GM12878 (cell line): ENCODE measurements at regions of chr7 and their contacts with region 1.

Region 1: DNA sequence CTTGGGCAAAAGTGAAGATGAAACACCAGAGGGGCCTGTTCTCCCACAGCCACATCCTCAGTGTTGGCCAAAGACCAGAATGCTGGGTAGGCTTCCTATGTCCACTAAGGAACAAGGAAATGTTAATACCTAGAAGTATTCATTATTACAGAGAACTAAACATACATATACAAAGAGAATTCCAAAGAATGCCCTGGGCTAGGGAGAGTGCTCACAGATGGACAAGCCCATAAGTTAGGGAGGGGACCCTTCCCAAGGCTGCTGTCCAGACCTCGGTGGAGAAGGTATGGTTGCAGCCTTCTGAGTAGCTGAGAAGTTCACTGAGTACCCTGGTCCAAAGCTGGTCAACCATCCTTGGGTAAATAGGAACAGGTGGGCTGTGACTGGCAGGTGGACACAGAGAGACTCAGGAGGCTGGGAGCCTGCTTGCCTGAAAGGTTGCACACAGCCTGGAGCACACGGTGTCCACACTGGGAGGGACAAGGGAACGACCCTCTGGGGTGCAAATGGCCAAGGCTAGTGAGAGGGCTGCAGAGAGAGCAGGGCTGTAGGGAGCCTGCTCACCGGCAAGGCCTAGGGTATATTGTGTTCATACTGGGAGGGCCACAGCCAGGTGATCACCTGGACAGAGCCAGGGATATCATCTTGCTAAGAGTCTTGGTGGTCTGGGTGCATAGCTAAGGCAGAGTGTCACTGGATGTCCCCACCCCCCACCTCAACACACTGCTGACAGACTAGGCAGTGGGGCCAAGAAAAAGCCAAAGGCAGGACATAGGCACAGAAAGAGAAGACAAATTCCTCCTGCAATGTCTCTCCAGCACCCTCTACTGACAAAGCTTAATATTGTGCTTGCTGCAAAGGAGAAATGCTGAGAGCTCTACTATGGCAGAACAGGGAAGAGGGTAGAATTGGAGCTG is 40.3 kb downstream of the CPVL start:
- DNase-seq: no peak
- ATAC-seq: peak; percentile 88
- H3K4me3 ChIP-seq: no peak overlapping the region
- H3K27ac ChIP-seq: no peak overlapping the region
- H3K4me1 ChIP-seq: no peaks in the 10 kb centered on the region
- H3K27me3 ChIP-seq: peaks cover 3% of the 10 kb centered on the region in 2 experiments; a peak in 2 of 4 replicates
- CTCF ChIP-seq: peak; percentile 73 to 80 (median 79)
- EP300 ChIP-seq: no peak
- POLR2A ChIP-seq: no peak
- RAD21 ChIP-seq: peak; percentile 79

Region 2: GRCh38 chr7:28456044-28456443 is 650.0 kb before region 1 on chr7:
- CTCF ChIA-PET with region 1: no interaction called
- POLR2A ChIA-PET with region 1: no interaction called
- RAD21 ChIA-PET with region 1: no interaction called
- SMC1A ChIA-PET with region 1: no interaction called
- in situ Hi-C with region 1: no loop called
- intact Hi-C with region 1: no loop called
- DNase-seq: no peak
- ATAC-seq: no peak
- H3K4me3 ChIP-seq: no peak overlapping the region
- H3K27ac ChIP-seq: no peak overlapping the region
- H3K4me1 ChIP-seq: no peaks in the 10 kb centered on the region
- H3K27me3 ChIP-seq: no peaks in the 10 kb centered on the region
- CTCF ChIP-seq: no peak
- EP300 ChIP-seq: no peak
- POLR2A ChIP-seq: no peak
- RAD21 ChIP-seq: no peak

Region 3: GRCh38 chr7:29091715-29092114 is 14.3 kb before region 1 on chr7:
- CTCF ChIA-PET with region 1: interaction called, 16 read pairs
- POLR2A ChIA-PET with region 1: no interaction called
- RAD21 ChIA-PET with region 1: interaction called, 3 read pairs
- SMC1A ChIA-PET with region 1: interaction called, 3 read pairs
- in situ Hi-C with region 1: no loop called
- intact Hi-C with region 1: no loop called
- DNase-seq: no peak
- ATAC-seq: peak; percentile 93
- H3K4me3 ChIP-seq: no peak overlapping the region; the same call in 1 of the 2 replicates
- H3K27ac ChIP-seq: no peak overlapping the region
- H3K4me1 ChIP-seq: peaks cover 5% of the 10 kb centered on the region; the same call in 1 of the 2 replicates
- H3K27me3 ChIP-seq: peaks cover 0 to 2% of the 10 kb centered on the region in 2 experiments; a peak in 1 of 4 replicates
- CTCF ChIP-seq: peak in 1 of 3 experiments; percentile 0; a peak in 1 of 6 replicates
- EP300 ChIP-seq: no peak
- POLR2A ChIP-seq: no peak
- RAD21 ChIP-seq: no peak

Region 4: DNA sequence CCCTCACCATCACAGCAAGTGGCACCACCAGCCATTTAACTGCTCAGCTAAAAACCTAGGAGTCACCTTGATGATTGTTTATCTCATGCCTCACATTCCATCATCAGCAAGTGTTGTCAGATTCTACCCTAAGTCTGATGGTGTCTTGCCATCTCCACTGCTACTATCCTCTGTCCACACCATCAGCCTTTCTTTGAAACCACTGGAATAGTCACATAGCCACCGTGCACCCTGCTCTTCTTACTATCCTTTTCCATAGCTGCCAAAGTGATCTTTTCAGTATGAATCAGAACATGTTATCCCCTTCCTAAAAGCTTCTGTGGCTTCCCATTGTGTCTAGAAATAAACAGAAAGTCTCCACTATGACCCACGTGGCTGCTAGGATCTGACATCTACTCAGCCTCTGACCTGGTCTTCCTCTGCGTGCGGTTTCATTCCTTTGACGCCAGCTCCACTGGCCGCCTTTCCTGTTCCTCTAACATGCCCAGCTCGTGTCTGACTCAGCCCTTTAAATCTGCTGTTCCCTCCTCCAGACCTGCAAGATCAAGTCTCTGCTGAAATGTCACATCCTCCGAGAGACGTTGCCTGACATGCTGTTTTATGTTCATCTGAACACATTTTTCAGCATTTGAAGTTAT is 72.1 kb after region 1 on chr7:
- CTCF ChIA-PET with region 1: no interaction called
- POLR2A ChIA-PET with region 1: no interaction called
- RAD21 ChIA-PET with region 1: no interaction called
- SMC1A ChIA-PET with region 1: no interaction called
- in situ Hi-C with region 1: no loop called
- intact Hi-C with region 1: no loop called
- DNase-seq: no peak
- ATAC-seq: no peak
- H3K4me3 ChIP-seq: no peak overlapping the region
- H3K27ac ChIP-seq: no peak overlapping the region
- H3K4me1 ChIP-seq: no peaks in the 10 kb centered on the region
- H3K27me3 ChIP-seq: no peaks in the 10 kb centered on the region
- CTCF ChIP-seq: no peak
- EP300 ChIP-seq: no peak
- POLR2A ChIP-seq: no peak
- RAD21 ChIP-seq: no peak

Region 5: DNA sequence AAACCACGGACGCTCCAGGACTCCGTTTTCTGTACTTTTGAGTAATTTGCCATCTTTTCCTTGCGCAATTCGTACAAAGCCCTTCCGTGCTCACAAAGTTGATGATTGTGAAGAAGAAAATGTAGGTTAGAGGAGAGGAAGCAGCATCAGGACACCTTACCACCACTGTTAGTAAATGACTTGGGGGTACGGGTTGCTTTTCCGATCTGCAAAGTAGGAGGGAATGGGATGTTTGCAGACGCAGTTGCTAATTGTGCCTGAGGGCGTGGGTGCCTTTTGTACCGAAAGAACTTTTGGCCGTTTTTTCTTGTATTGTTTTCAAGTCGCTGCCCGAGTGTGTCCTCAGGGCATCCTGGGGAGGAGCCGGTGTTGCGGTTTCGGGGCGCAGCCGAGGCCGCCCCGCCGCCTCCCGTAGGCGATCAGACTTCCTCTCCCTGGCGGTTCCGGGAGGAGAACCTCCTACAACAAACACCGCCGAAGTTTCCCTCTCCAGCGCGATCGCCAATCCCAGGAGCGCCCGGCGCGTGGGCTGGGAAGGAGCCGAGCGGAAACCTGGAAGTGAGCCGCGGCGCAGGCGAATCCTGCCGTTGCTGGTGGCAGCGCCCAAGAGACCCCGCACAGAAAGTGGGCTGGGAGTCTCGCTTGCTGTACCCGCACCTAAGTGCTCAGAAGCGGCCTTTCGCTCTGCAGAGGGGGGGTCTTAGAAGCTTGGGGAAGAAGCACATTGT is 458.6 kb after region 1 on chr7:
- CTCF ChIA-PET with region 1: no interaction called
- POLR2A ChIA-PET with region 1: no interaction called
- RAD21 ChIA-PET with region 1: no interaction called
- SMC1A ChIA-PET with region 1: no interaction called
- in situ Hi-C with region 1: no loop called
- intact Hi-C with region 1: no loop called
- DNase-seq: no peak
- ATAC-seq: no peak
- H3K4me3 ChIP-seq: no peak overlapping the region
- H3K27ac ChIP-seq: no peak overlapping the region
- H3K4me1 ChIP-seq: no peaks in the 10 kb centered on the region
- H3K27me3 ChIP-seq: peaks cover 12 to 27% of the 10 kb centered on the region in 2 experiments
- CTCF ChIP-seq: no peak
- EP300 ChIP-seq: no peak
- POLR2A ChIP-seq: no peak
- RAD21 ChIP-seq: no peak